ENCODE measurements at regions of chr17 and their contacts with region 1.

Region 1: GRCh38 chr17:15999439-16000350 is at the starts of genes TTC19 and ZSWIM7:
- DNase-seq: peak; percentile 98
- H3K4me3 ChIP-seq: peak within 1 kb of the TSS; percentile 78
- H3K27ac ChIP-seq: peak within 1 kb of the TSS; percentile 87
- H3K4me1 ChIP-seq: peaks cover 10% of the 10 kb centered on the region
- H3K27me3 ChIP-seq: no peaks in the 10 kb centered on the region
- CTCF ChIP-seq: no peak
- total RNA-seq, gene TTC19: 44.5 to 55.2 TPM
- total RNA-seq, gene ZSWIM7: 17.7 to 18.8 TPM

Region 2: DNA sequence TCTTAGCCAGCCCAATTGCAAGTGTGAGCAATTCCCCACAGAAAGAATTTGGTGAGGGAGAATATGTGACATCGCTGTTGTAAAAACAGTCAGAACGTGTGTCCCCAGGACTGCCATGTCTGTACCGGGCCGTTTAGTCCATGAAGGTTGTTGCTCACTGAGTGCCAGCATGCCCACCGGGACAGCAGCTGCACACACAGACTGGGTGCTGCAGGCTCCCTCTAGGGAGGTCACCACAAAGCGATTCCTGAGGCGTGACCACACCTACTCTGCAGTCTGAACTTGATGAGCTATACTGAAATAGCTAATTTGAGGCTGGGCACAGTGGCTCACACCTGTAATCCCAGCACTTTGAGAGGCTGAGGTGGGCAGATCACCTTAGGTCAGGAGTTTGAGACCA is 98.8 kb before region 1 on chr17:
- intact Hi-C with region 1: no loop called
- DNase-seq: no peak
- H3K4me3 ChIP-seq: no peak overlapping the region
- H3K27ac ChIP-seq: no peak overlapping the region
- H3K4me1 ChIP-seq: no peaks in the 10 kb centered on the region
- H3K27me3 ChIP-seq: no peaks in the 10 kb centered on the region
- CTCF ChIP-seq: no peak

Region 3: DNA sequence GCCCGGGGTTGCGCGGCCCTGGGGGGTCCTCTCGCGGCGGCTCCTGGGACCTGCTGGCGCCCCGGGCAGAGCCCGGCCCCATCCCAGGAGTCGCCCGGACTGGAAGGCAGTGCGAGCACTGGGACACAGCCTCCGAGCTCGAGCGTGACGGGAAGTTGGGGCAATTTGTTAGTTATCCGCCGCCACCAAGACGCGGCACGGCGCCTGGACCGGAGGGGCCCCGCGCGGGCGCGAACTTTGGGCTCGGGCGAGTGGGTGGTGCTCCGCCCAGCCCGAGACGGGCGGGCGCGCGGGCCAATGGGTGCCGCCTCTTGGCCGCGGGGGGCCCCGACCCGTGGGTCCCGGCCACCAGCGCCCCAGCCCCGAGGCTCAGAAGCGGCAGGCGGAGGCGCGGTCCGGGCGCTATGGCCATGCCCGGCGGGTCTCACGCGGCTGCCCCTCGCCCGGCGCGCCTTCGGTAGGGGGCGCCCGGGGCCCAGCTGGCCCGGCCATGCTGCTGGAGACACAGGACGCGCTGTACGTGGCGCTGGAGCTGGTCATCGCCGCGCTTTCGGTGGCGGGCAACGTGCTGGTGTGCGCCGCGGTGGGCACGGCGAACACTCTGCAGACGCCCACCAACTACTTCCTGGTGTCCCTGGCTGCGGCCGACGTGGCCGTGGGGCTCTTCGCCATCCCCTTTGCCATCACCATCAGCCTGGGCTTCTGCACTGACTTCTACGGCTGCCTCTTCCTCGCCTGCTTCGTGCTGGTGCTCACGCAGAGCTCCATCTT is 54.8 kb before region 1 on chr17 and contains the start of gene ADORA2B:
- intact Hi-C with region 1: loop called (anchors 2 kb)
- DNase-seq: peak; percentile 75
- H3K4me3 ChIP-seq: peak within 1 kb of the TSS; percentile 70
- H3K27ac ChIP-seq: peak within 1 kb of the TSS; percentile 89
- H3K4me1 ChIP-seq: no peaks in the 10 kb centered on the region
- H3K27me3 ChIP-seq: no peaks in the 10 kb centered on the region
- CTCF ChIP-seq: peak; percentile 48
- total RNA-seq, gene ADORA2B: 20.8 to 39.4 TPM

Region 4: DNA sequence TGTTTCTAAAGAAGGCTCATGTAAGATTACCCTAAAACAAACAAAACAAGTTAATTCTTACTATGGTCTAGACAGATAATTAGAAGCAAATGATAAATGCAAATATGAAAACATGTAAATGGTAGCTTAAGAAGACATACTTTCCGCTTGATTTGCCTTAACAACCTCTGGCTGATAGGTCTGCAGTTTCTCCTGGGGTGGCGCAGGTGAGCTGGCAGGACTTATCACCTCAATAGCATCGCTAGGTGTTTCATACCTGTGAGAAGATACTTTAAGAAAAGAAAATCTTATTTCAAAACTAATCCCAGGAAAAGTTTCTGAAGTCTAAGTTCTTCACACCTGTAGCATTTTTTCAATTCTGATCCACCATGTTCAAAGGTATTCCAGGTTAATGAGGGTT is 58.6 kb after region 1 on chr17:
- intact Hi-C with region 1: no loop called
- DNase-seq: no peak
- H3K4me3 ChIP-seq: no peak overlapping the region
- H3K27ac ChIP-seq: no peak overlapping the region
- H3K4me1 ChIP-seq: no peaks in the 10 kb centered on the region
- H3K27me3 ChIP-seq: no peaks in the 10 kb centered on the region
- CTCF ChIP-seq: no peak